ENCODE measurements at regions of chr5 and their contacts with region 1.

Region 1: GRCh38 chr5:1936413-1936812 is 53.7 kb upstream of the IRX4 start:
- DNase-seq: peak; percentile 97
- H3K4me3 ChIP-seq: no peak overlapping the region
- H3K27ac ChIP-seq: peak overlapping the region; percentile 91
- H3K4me1 ChIP-seq: peaks cover 45% of the 10 kb centered on the region
- H3K27me3 ChIP-seq: no peaks in the 10 kb centered on the region
- CTCF ChIP-seq: no peak

Region 2: DNA sequence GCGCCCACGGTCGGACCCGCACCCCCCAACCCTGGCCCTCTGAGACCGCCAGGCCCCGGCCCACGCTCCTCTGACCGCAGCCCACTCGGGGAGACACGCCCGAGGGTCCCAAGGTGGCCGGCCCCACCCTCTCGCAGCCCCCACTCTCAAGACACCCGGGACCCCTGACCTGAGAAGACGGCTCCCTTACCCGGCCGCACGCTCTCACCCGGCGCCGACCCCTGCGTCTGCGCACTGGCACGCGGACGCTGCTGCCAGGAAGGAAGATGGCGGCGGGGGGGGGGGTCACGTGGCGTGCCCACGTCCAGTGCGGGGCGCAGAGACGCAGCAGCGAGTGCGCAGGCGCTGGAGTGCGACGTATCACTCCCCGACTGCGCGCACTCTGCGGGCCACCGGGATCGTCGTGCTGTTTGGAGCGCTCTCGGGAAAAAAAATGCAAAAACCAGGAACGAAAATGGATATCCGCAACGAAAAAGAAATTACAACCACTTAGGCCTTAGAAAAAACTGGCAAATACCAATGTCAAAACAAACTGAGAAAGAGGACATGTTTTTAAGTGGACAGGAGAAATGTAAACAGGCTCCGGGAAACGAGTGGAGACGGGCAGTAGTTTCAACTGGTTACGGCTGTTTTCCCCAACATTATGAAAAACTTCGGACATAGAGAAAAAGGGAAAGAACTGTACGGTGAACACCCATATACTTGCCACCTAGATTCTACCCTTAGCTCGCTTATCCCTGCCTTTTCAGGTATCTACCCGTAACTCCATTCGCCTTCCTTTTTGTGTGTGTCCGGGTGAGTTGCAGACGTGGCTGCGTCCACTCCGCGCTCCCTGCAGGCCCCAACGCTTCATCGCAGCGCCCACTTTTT is 136.6 kb before region 1 on chr5 and contains the start of gene MRPL36:
- CTCF ChIA-PET with region 1: no interaction called
- dilution Hi-C with region 1: no loop called
- in situ Hi-C with region 1: no loop called
- intact Hi-C with region 1: loop called (anchors 1 kb)
- DNase-seq: peak; percentile 87
- H3K4me3 ChIP-seq: peak within 1 kb of the TSS; percentile 69 to 86 (median 74)
- H3K27ac ChIP-seq: peak within 1 kb of the TSS; percentile 59
- H3K4me1 ChIP-seq: peaks cover 20% of the 10 kb centered on the region
- H3K27me3 ChIP-seq: no peaks in the 10 kb centered on the region
- CTCF ChIP-seq: no peak
- total RNA-seq, gene MRPL36: 47.2 to 82.2 TPM

Region 3: GRCh38 chr5:1815952-1816292 is 120.5 kb before region 1 on chr5:
- CTCF ChIA-PET with region 1: no interaction called
- dilution Hi-C with region 1: no loop called
- in situ Hi-C with region 1: no loop called
- intact Hi-C with region 1: no loop called
- DNase-seq: no peak
- H3K4me3 ChIP-seq: no peak overlapping the region
- H3K27ac ChIP-seq: no peak overlapping the region
- H3K4me1 ChIP-seq: peaks cover 6% of the 10 kb centered on the region
- H3K27me3 ChIP-seq: no peaks in the 10 kb centered on the region
- CTCF ChIP-seq: no peak

Region 4: DNA sequence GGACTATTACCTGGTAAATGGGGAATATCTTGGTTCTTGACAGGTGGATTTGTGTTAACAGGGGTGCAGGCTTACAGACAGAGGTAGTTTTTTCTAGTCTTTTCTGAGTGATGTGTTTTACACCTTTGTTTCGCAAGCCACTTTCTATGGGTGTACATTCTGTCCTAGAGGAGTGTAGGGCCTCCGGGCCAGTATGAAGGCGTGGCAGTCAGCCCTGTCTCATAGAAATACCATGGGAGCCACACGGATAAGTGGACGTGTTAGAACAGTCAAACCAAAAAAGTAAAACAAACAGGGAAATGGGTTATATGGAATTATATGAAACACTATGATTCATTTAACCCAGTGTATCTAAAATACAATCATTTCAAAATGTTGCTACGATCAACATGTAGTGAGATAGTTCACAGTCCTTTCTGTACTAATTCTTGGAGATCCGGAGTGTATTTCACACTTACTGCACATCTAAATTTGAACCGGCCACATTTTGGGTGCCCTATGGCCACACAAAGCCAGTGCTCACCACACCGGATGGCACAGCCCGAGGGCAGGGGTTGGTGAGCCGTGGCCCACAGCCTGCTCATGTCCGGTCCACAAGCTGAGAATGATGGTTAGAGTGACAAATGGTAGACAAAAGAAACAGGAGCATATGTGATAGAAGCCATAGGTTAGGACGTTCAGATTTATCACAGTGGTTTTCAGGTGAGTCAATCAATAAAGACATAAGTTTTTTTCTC is 26.4 kb after region 1 on chr5:
- CTCF ChIA-PET with region 1: no interaction called
- dilution Hi-C with region 1: no loop called
- in situ Hi-C with region 1: no loop called
- intact Hi-C with region 1: loop called (anchors 1 kb)
- DNase-seq: peak; percentile 95
- H3K4me3 ChIP-seq: no peak overlapping the region
- H3K27ac ChIP-seq: peak overlapping the region; percentile 100
- H3K4me1 ChIP-seq: peaks cover 34% of the 10 kb centered on the region
- H3K27me3 ChIP-seq: no peaks in the 10 kb centered on the region
- CTCF ChIP-seq: no peak

Region 5: DNA sequence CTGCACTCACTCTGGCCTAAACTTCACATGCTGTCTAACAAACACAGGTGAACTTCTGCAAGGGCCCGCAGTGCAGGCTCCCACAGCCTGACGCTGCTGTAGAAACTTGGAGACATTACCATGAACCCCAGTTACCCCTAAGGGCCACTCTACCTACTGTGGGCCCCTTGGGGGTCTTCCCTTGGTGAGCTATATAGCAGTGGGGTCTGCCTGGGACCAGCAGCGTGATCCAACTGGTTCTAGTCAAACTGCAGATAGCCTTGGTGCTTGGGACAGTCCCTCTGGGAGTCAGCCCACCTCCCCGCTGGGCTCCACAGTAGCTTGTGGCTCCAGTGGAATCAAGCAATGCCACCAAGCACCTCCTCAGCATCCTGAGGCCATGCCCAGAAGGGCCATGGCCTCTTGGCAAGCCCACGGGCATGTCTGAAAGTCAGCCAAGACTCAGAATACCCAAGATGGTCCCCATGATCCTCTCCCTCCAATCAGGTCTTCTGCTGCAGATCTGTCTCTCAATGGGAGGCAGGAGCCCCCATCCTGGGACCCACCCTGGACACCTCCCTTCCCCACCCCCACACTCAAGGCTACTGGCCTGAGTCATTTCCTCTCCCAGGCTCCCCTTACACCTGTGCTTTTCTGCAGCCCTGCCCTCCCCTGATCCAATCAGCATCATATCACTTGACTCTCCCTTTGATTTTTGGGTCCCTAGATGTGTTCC is 1429.2 kb after region 1 on chr5:
- CTCF ChIA-PET with region 1: no interaction called
- dilution Hi-C with region 1: no loop called
- in situ Hi-C with region 1: no loop called
- intact Hi-C with region 1: no loop called
- DNase-seq: no peak
- H3K4me3 ChIP-seq: no peak overlapping the region
- H3K27ac ChIP-seq: no peak overlapping the region
- H3K4me1 ChIP-seq: no peaks in the 10 kb centered on the region
- H3K27me3 ChIP-seq: no peaks in the 10 kb centered on the region
- CTCF ChIP-seq: no peak

Measured in mammary epithelial cell (primary cell).